Spleen (tissue), 13 donors: ENCODE measurements at regions of chr19 and their contacts with region 1.

Region 1: GRCh38 chr19:56252699-56253422 is 19.7 kb upstream of the EDDM13 start:
- DNase-seq: peak; percentile 92
- H3K4me3 ChIP-seq: no peak overlapping the region
- H3K27ac ChIP-seq: no peak overlapping the region
- H3K4me1 ChIP-seq: no peaks in the 10 kb centered on the region
- H3K27me3 ChIP-seq: no peaks in the 10 kb centered on the region
- CTCF ChIP-seq: peak; percentile 55 to 88 (median 81)
- POLR2A ChIP-seq: no peak

Region 2: GRCh38 chr19:56314562-56315077 is 61.8 kb after region 1 on chr19 and contains the start of gene ZSCAN5A:
- intact Hi-C with region 1: no loop called
- DNase-seq: peak; percentile 100
- H3K4me3 ChIP-seq: peak within 1 kb of the TSS; percentile 68 to 94 (median 88)
- H3K27ac ChIP-seq: peak within 1 kb of the TSS; percentile 90 to 98 (median 96)
- H3K4me1 ChIP-seq: peaks cover 9 to 58% (median 29%) of the 10 kb centered on the region in 6 donors
- H3K27me3 ChIP-seq: no peaks in the 10 kb centered on the region
- CTCF ChIP-seq: peak in 1 of 11 experiments; percentile 20
- POLR2A ChIP-seq: no peak
- total RNA-seq, gene ZSCAN5A: 5.6 to 18.7 (median 11.4) TPM

Region 3: GRCh38 chr19:56333505-56333904 is 80.6 kb after region 1 on chr19:
- intact Hi-C with region 1: loop called (anchors 5 kb)
- DNase-seq: no peak
- H3K4me3 ChIP-seq: no peak overlapping the region
- H3K27ac ChIP-seq: no peak overlapping the region
- H3K4me1 ChIP-seq: no peaks in the 10 kb centered on the region
- H3K27me3 ChIP-seq: no peaks in the 10 kb centered on the region
- CTCF ChIP-seq: peak; percentile 11 to 74 (median 58)
- POLR2A ChIP-seq: no peak

Region 4: DNA sequence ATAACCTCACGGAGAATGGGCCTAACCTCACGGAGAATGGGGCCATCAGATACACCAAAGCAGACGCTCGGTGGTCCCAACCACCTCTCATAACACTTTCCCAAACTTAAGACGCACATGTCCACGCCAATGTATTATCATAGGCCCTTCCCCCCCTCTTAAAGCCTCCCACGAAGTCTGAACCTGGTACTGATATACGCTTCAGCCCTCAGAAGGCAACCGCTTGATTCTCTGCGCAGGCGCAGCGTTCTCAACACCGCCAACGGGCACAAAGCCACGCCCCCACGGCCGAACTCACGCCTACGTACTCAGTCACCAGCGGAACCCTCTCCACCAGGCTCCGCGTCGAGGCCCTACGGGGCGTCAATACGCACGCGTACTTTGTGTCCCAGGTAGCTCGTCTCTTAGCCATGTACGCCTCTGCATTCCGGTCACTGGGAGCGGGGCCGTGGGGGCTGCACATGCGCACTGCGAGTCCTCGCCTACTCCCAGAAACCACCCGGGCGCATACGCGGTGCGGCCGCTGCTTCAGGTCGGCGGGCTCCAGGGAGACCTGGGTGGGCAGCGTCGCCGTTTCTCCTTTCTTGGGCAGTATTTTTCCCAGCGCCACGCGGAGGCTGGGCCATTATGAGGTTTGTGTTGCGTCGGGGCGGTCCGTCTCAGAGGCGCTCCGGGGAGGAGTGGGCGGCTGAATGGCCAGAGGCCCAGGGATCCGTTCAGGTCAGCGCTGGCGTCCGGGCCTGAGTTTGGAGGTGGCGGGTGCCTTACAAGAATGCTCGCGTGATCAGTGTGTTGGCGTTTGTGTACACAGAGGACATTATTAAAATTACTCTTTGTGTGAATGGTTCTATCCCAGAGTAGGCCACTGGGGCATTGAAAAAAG is 115.2 kb after region 1 on chr19:
- intact Hi-C with region 1: no loop called
- DNase-seq: peak; percentile 95
- H3K4me3 ChIP-seq: peak overlapping the region; percentile 45 to 78 (median 56)
- H3K27ac ChIP-seq: peak overlapping the region; percentile 77 to 90 (median 86)
- H3K4me1 ChIP-seq: peaks cover 6 to 33% (median 16%) of the 10 kb centered on the region in 6 donors
- H3K27me3 ChIP-seq: no peaks in the 10 kb centered on the region
- CTCF ChIP-seq: no peak
- POLR2A ChIP-seq: peak in 2 of 3 donors; percentile 29 to 31